Heart right ventricle (tissue), 16 donors: ENCODE measurements at regions of chr5 and their contacts with region 1.

Region 1: DNA sequence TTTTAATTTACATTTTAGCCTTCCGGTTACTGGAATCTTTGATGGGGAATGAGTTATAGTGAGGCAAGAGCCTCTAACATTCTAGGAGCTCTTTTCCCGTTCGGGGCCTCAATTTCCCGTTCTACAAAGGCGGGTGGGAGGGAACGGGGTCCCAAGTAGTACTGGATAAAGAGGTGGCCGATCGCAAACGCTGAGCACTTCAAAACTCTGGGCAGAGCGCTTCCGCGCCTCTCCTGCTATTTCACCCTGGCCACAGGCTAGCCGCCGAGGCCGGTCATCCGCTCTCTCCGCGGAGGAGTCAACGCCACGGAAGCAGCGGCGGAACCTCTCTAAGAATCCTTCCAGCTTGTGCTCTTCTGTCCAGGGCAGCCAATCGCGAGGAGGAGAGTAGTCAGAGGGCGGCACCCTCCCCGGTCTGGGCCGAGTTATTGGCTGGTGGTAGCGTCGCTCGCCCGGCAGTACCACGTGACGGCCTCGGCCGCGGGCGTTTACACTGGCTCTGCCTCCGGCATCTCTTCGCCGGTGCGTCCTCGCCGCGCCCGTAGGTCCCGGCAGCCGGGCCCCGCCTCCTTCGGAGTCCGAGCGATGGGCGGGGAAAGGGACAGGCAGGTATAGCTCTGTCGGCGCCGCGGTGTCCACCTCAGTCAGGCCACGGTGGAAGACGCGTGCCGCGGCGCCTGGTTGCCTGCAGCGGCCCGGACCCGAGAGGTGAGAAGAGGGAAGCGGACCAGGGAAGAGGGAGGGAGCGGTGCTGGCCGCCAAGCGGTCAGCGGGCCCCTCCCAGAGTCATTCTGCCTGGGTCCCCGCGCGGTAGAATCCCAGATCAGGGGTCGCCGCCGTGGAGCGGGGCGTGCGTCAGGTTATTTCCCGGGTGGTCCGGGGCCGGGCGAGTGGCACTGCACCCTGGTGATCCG is at the start of gene SLC26A2:
- DNase-seq: peak; percentile 96 to 97
- ATAC-seq: peak; percentile 99 to 100 (median 99)
- H3K4me3 ChIP-seq: peak within 1 kb of the TSS; percentile 66 to 91 (median 79)
- H3K27ac ChIP-seq: peak within 1 kb of the TSS; percentile 69 to 95 (median 84)
- H3K4me1 ChIP-seq: peaks cover 0 to 25% (median 18%) of the 10 kb centered on the region in 9 donors
- H3K27me3 ChIP-seq: no peaks in the 10 kb centered on the region
- CTCF ChIP-seq: no peak
- total RNA-seq, gene SLC26A2: 3.8 to 7.3 (median 5.4) TPM

Region 2: GRCh38 chr5:149636851-149637246 is 323.7 kb before region 1 on chr5:
- intact Hi-C with region 1: loop called in 2 of 10 experiments (anchors 5 to 10 kb)
- DNase-seq: peak in 1 of 2 donors; percentile 87
- ATAC-seq: peak; percentile 45 to 72 (median 56)
- H3K4me3 ChIP-seq: no peak overlapping the region
- H3K27ac ChIP-seq: no peak overlapping the region
- H3K4me1 ChIP-seq: peaks cover 13 to 45% (median 27%) of the 10 kb centered on the region in 9 donors
- H3K27me3 ChIP-seq: no peaks in the 10 kb centered on the region
- CTCF ChIP-seq: peak; percentile 65 to 90 (median 86)

Region 3: DNA sequence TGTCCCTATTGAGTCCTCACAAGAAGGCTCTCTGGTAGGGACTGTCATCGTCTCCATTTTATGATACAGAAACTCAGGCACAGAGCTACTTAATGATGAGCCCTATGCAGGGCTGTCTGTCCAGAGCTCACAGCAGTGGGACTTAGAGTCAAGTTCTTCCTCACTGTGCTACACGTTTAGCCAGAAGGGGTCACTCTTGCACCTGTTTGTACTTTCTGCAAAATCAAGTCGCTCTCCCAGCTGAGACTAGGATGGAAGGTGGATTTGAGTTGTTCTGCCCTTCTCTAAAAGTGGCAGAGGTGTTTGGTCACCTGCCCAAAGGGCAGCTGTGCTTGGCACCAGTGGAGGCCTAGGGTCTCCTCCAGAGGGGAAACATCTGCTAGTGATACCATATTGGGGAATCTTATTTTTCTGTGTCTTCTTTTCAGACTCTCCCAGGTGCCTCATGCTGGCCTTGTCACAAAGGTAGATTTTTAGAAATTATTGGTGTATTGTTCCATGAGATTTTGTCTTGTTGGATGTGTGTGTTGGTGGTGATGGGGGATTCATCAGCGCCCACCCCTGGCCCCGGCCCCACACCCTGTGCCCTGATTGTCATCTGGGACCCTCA is 126.2 kb before region 1 on chr5:
- intact Hi-C with region 1: loop called in 4 of 10 experiments (anchors 2 to 10 kb)
- DNase-seq: peak in 1 of 2 donors; percentile 67
- ATAC-seq: peak in 7 of 8 donors; percentile 9 to 44 (median 38)
- H3K4me3 ChIP-seq: no peak overlapping the region
- H3K27ac ChIP-seq: no peak overlapping the region
- H3K4me1 ChIP-seq: peaks cover 3 to 57% (median 12%) of the 10 kb centered on the region in 9 donors
- H3K27me3 ChIP-seq: no peaks in the 10 kb centered on the region
- CTCF ChIP-seq: peak; percentile 26 to 75 (median 63)

Region 4: GRCh38 chr5:149839761-149840160 is 120.8 kb before region 1 on chr5:
- intact Hi-C with region 1: loop called in 5 of 10 experiments (anchors 2 to 10 kb)
- DNase-seq: peak in 1 of 2 donors; percentile 31
- ATAC-seq: peak; percentile 6 to 36 (median 26)
- H3K4me3 ChIP-seq: no peak overlapping the region
- H3K27ac ChIP-seq: peak overlapping the region in 9 of 10 donors; percentile 12 to 76 (median 54)
- H3K4me1 ChIP-seq: peaks cover 10 to 74% (median 29%) of the 10 kb centered on the region in 9 donors
- H3K27me3 ChIP-seq: no peaks in the 10 kb centered on the region
- CTCF ChIP-seq: no peak

Region 5: DNA sequence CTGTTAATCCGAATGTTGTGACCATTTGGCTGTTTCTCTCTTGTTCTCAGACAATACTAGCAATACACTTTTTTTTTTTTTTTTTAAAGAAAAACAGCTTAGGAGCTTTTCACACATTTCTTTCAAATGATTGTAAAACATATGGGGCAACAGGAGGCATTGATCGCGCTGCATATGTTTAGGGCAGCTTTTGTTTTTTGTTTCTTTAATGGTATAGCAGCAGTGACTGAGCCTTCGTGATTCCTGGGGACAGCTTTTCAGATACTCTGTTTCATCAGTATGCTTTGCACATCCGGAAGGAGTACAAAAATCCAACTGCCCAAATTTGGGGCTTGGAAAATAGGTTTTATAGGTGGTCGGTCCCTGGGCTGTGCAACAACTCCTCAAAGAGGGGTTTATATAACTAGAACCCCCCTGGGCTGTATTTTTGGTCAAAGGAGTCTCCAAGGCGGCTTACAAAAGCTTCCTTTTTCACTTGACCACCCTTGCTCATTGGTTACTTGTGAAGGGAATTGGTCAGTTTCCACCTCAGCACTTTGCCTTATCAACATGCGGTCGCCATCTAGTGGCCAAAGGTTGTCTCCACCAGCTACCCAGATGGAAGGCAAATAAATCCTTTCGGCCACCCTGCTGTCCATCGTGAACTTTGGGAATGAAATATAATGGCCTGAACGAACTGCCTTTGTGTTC is 107.7 kb before region 1 on chr5:
- intact Hi-C with region 1: loop called in 3 of 10 experiments (anchors 5 kb)
- DNase-seq: peak; percentile 61 to 80
- ATAC-seq: peak in 7 of 8 donors; percentile 33 to 80 (median 62)
- H3K4me3 ChIP-seq: no peak overlapping the region
- H3K27ac ChIP-seq: peak overlapping the region in 3 of 10 donors; percentile 9 to 54 (median 37)
- H3K4me1 ChIP-seq: peaks cover 0 to 21% (median 11%) of the 10 kb centered on the region in 9 donors
- H3K27me3 ChIP-seq: no peaks in the 10 kb centered on the region
- CTCF ChIP-seq: peak; percentile 64 to 93 (median 89)

Region 6: DNA sequence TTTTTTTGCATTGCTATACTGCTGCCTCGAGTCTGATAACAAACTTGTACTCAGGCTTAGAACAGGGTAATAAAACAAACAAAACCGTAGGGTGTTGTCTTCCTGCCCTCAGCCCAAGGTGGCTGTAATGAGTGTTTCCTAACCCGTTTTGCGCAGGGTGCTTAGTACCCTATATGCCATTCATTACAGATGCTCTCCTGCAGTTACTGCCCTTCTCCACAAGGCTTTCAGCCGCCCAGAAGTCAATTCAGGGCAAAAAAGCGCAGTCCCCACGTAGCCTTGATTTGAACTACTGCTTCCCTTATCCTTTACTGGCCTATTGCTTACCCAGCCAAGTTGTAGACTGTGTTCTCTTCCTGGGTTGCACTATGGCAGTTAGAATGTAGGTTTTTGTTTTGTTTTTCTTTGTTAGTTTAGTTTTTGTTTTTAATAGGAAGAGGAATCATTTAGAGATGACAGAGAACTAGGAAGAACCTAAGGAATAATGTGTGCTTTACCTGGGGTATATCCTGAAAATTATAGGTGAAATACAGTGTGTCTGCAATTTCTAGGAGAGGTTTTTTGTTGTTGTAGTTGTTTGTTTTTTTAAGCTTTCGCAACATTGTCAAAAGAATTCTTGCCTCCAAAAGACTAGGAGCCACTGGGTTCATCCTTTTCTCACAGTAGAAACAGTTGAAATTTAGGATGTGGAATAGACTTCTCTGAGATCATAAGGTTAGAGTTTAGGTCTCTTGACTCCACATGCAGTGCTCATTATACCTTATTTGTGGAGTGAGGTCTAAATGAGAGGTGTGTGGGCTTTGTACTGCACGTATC is 41.4 kb after region 1 on chr5:
- intact Hi-C with region 1: no loop called
- DNase-seq: peak in 1 of 2 donors; percentile 39
- ATAC-seq: peak; percentile 29 to 72 (median 54)
- H3K4me3 ChIP-seq: peak overlapping the region; percentile 72 to 100 (median 98)
- H3K27ac ChIP-seq: peak overlapping the region in 8 of 10 donors; percentile 90 to 97 (median 95)
- H3K4me1 ChIP-seq: peaks cover 7 to 45% (median 35%) of the 10 kb centered on the region in 9 donors
- H3K27me3 ChIP-seq: no peaks in the 10 kb centered on the region
- CTCF ChIP-seq: peak; percentile 17 to 70 (median 61)